ENCODE measurements at regions of chr6 and their contacts with region 1.

Region 1: GRCh38 chr6:32609731-32610640 is 20.3 kb upstream of the HLA-DRB1 start:
- DNase-seq: peak; percentile 62
- H3K4me3 Mint-ChIP-seq: no peak overlapping the region
- H3K27ac Mint-ChIP-seq: no peak overlapping the region
- H3K4me1 Mint-ChIP-seq: peaks cover 15% of the 10 kb centered on the region
- H3K27me3 Mint-ChIP-seq: no peaks in the 10 kb centered on the region

Region 2: DNA sequence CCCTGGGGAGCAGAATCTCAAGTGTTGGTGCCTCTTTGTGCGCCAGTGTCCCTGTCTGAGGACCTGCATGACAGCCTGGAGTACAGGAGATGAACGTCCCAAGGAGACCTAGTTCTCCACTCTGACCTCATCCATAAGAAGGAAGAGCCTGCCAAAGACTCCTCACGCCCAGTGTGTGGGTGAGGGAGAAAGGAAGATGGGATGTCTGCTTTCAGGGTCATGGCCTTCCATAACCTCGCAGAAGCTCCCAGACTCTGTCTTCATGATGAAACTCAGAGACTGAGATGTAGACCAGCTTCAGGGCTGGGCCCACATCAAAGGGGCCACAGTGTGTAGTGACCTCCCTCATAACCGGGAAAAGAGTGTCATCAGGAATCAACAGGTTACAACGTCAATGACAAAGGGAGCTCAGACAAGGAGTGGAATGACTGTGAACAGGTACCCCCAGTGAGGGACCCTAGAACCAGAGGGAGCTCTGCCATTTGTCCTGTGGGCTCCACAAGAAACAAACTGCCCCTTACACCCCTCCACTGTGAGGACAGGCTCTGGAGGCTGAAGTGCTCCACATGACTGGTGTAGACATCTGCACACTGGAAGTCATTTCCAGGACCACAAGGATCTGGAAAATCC is 48.4 kb after region 1 on chr6:
- intact Hi-C with region 1: no loop called
- DNase-seq: no peak
- H3K4me3 Mint-ChIP-seq: no peak overlapping the region
- H3K27ac Mint-ChIP-seq: no peak overlapping the region
- H3K4me1 Mint-ChIP-seq: peaks cover 33% of the 10 kb centered on the region
- H3K27me3 Mint-ChIP-seq: peaks cover 9% of the 10 kb centered on the region

Region 3: DNA sequence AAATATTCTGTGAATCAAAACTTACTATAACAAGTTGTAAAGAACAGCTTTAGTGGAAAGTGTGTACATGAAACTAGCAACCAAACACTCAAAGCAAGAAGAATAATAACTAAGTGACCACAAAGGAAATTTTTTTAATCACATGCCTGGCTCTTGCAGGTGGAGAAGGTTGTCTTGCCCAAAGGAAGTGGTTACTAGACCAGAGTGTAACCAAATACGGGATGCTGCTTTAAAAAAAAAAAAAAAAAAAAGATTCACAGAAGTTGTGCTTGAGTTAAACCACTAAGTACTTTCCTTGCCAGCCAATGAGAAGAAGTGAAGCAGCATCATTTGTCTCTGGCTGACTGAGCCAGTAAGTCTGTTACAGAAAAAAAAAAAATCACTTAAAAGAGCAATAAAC is 75.6 kb after region 1 on chr6:
- intact Hi-C with region 1: loop called (anchors 1 kb)
- DNase-seq: peak; percentile 47
- H3K4me3 Mint-ChIP-seq: peak overlapping the region; percentile 66
- H3K27ac Mint-ChIP-seq: peak overlapping the region; percentile 77
- H3K4me1 Mint-ChIP-seq: peaks cover 46% of the 10 kb centered on the region
- H3K27me3 Mint-ChIP-seq: peaks cover 11% of the 10 kb centered on the region

Measured in activated T-helper 1 cell treated with anti-CD3 and anti-CD28 coated beads, Interleukin-12 subunit alpha, Interleukin-12 subunit beta, Interleukin-2, Interleukin-4 antibody, amounts not matched to agents 30 ng/mL and 10 ng/mL and 1 ng/mL, durations not matched to agents 14 hours and 24 hours and 36 hours (primary cell).